ENCODE measurements at regions of chr17 and their contacts with region 1.

Region 1: DNA sequence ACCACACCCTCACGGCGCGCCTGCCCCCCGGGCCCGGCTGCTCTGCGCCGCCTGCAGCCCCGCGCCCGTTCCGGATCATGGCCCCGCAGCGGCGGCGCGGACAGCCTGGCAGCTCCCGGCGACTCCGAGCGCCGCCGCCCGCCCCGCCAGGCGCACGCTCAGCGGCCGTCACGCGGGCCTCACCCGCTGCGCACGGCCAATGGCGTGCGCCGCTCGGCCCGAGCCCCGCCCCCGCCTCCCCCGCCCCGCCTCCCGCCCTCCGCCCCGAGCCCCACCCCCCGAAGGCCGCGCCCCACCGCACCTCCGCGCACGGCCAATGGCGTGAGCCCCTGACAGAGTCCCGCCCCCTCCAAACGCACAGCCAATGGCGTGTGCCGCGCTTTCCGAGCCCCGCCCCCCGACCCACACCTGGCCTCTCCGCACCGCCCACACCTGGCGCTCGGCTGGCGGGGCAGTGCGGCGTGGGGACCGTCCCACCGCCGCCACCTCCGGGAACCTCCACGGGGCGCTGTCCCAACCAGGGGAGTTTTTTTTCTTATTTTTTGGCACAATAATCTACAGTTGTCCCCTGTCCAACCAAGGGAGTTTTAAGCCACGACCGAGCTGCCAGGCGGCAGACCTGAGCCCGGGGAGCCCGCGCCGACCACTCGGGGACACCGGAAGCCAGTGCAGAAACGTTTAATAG is at the start of gene PCYT2:
- DNase-seq: peak; percentile 97
- ATAC-seq: peak; percentile 96
- H3K4me3 Mint-ChIP-seq: peak within 1 kb of the TSS; percentile 79
- H3K27ac Mint-ChIP-seq: no peak within 1 kb of the TSS
- H3K4me1 Mint-ChIP-seq: peaks cover 14% of the 10 kb centered on the region
- H3K27me3 Mint-ChIP-seq: no peaks in the 10 kb centered on the region
- total RNA-seq, gene PCYT2: 19.7 to 24.0 TPM

Region 2: GRCh38 chr17:81871387-81872230 is 39.8 kb before region 1 on chr17:
- CTCF ChIA-PET with region 1: interaction called, 4 read pairs
- POLR2A ChIA-PET with region 1: interaction called, 6 read pairs
- intact Hi-C with region 1: loop called in 1 of 2 experiments (anchors 2 kb)
- DNase-seq: peak; percentile 98
- ATAC-seq: no peak
- H3K4me3 Mint-ChIP-seq: peak overlapping the region; percentile 81
- H3K27ac Mint-ChIP-seq: peak overlapping the region; percentile 92
- H3K4me1 Mint-ChIP-seq: peaks cover 34% of the 10 kb centered on the region
- H3K27me3 Mint-ChIP-seq: no peaks in the 10 kb centered on the region

Region 3: DNA sequence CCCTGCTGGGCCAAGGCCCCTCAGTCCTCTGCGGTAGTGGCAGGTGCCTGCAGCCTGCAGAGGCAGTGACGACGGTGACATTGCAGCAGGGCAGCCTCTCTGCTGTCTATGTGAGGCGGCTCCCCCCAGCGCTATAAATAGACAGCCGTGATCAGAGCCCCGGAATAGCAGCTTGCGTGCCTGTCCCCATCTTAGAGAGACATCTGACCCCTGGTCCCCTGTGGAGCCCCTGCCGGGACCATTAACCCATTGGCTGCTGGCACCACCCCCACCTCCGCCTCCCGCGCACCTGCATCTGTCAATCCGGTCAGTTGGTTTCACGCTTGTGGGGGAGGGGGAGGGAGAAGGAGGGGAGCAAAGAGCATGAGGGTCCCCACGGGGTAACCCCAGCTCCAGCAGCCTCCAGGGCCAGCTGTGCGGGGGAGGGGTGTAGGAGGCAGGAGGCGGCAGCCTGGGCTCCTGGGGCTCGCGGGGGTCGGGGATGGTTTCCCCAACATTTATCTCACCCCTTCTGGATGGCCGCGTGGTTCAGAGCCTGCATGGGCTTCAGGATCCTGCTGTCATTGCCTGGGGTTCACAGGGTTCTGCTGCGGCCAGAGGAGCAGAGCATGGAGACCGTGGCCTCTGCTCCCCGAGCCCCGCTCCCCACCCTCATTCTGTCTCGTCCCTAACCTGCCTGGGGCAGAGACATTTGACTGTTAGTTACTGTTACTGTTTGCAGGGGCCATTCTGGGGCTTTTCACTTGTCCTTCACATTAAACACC is 30.6 kb after region 1 on chr17:
- CTCF ChIA-PET with region 1: no interaction called
- POLR2A ChIA-PET with region 1: no interaction called
- intact Hi-C with region 1: loop called in 1 of 2 experiments (anchors 1 kb)
- DNase-seq: no peak
- ATAC-seq: no peak
- H3K4me3 Mint-ChIP-seq: no peak overlapping the region
- H3K27ac Mint-ChIP-seq: no peak overlapping the region
- H3K4me1 Mint-ChIP-seq: peaks cover 5% of the 10 kb centered on the region
- H3K27me3 Mint-ChIP-seq: peaks cover 5% of the 10 kb centered on the region

Region 4: GRCh38 chr17:82698065-82698973 is 786.9 kb after region 1 on chr17 and contains the start of gene RAB40B:
- CTCF ChIA-PET with region 1: no interaction called
- POLR2A ChIA-PET with region 1: no interaction called
- intact Hi-C with region 1: loop called in 1 of 2 experiments (anchors 5 kb)
- DNase-seq: peak; percentile 99
- ATAC-seq: peak; percentile 99
- H3K4me3 Mint-ChIP-seq: peak within 1 kb of the TSS; percentile 67
- H3K27ac Mint-ChIP-seq: peak within 1 kb of the TSS; percentile 51
- H3K4me1 Mint-ChIP-seq: peaks cover 10% of the 10 kb centered on the region
- H3K27me3 Mint-ChIP-seq: peaks cover 3% of the 10 kb centered on the region
- total RNA-seq, gene RAB40B: 3.2 to 4.1 TPM